CD8-positive, alpha-beta T cell (primary cell): ENCODE measurements at regions of chr2 and their contacts with region 1.

Region 1: GRCh38 chr2:96485751-96486651 is 19.2 kb downstream of the NEURL3 start:
- DNase-seq: peak; percentile 48 to 91 (median 77)
- ATAC-seq: peak; percentile 93
- H3K4me3 ChIP-seq: peak overlapping the region; percentile 56 to 59
- H3K4me3 Mint-ChIP-seq: peak overlapping the region; percentile 88
- H3K27ac ChIP-seq: peak overlapping the region; percentile 73 to 88
- H3K27ac Mint-ChIP-seq: peak overlapping the region; percentile 97
- H3K4me1 ChIP-seq: peaks cover 18% of the 10 kb centered on the region
- H3K4me1 Mint-ChIP-seq: peaks cover 22% of the 10 kb centered on the region
- H3K27me3 ChIP-seq: no peaks in the 10 kb centered on the region
- H3K27me3 Mint-ChIP-seq: no peaks in the 10 kb centered on the region
- CTCF ChIP-seq: no peak

Region 2: DNA sequence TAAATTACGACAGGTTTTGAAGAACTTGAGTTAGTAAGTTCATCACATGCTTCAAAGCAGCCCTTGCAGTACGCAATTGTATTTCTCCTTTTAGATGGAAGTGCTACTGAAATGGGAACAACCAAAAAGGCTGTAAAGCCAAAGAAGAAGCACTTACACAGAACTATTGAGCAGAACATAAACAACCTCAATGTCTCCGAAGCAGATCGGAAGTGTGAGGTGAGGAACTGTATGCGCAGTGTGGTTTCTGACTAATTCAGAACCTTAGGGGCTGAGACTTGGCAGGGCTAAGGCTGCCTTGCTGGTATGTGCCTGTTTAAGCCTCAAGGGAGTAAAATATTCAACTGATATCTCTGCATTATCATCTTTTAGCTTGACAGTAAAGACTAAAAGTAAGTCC is 142.0 kb before region 1 on chr2:
- CTCF ChIA-PET with region 1: no interaction called
- POLR2A ChIA-PET with region 1: no interaction called
- intact Hi-C with region 1: loop called in 1 of 2 experiments (anchors 5 kb)
- DNase-seq: peak in 8 of 9 experiments; percentile 29 to 84 (median 62)
- ATAC-seq: peak; percentile 78
- H3K4me3 ChIP-seq: no peak overlapping the region
- H3K4me3 Mint-ChIP-seq: no peak overlapping the region
- H3K27ac ChIP-seq: peak overlapping the region; percentile 19 to 63
- H3K27ac Mint-ChIP-seq: peak overlapping the region; percentile 80
- H3K4me1 ChIP-seq: peaks cover 16% of the 10 kb centered on the region
- H3K4me1 Mint-ChIP-seq: peaks cover 40% of the 10 kb centered on the region
- H3K27me3 ChIP-seq: no peaks in the 10 kb centered on the region
- H3K27me3 Mint-ChIP-seq: no peaks in the 10 kb centered on the region
- CTCF ChIP-seq: no peak

Region 3: DNA sequence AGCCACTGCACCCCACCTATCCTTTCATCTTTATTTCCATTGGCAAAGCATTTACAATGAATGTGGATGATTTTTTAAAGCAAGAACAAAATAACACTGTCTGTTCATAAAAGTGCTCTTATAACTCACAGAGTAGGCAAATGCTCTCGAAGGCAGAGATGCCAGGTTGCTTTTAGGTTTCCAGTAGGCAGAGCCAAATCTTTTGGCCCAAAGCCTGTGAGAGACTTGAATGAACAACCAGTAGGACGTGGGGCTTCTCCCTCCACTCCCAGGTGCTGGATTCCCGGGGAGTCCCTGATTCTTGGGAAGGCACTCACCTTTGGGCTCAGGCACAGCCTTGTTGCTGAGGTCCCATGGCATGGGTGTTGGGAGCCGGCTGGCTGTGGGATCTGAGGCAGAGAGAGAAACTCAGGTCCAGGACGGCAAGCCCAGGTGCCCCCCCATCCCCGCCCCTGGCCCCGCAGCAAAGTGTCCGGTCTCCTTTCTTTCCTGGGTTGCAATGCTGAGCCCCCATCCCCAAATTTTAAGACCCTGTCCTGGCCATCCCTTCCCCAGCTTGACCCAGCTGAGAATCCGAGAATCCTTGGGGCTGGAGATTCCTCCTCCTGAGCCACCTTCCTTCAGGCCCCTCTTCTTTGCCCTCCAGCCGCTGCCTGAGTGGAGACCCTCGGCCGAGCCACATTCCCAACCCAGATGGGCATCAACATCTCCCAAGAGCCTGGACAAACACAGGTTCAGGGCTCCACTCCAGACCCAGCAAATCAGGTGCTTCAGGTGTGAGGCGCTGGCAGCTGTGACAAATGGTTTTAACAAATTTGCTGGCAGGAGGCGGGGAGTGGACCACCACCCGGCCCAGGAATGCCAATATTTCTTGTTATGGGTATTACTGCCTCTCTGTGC is 13.3 kb after region 1 on chr2:
- CTCF ChIA-PET with region 1: no interaction called
- POLR2A ChIA-PET with region 1: no interaction called
- intact Hi-C with region 1: no loop called
- DNase-seq: no peak
- ATAC-seq: no peak
- H3K4me3 ChIP-seq: no peak overlapping the region
- H3K4me3 Mint-ChIP-seq: no peak overlapping the region
- H3K27ac ChIP-seq: no peak overlapping the region
- H3K27ac Mint-ChIP-seq: no peak overlapping the region
- H3K4me1 ChIP-seq: peaks cover 16% of the 10 kb centered on the region
- H3K4me1 Mint-ChIP-seq: peaks cover 8% of the 10 kb centered on the region
- H3K27me3 ChIP-seq: no peaks in the 10 kb centered on the region
- H3K27me3 Mint-ChIP-seq: peaks cover 2% of the 10 kb centered on the region
- CTCF ChIP-seq: no peak

Region 4: DNA sequence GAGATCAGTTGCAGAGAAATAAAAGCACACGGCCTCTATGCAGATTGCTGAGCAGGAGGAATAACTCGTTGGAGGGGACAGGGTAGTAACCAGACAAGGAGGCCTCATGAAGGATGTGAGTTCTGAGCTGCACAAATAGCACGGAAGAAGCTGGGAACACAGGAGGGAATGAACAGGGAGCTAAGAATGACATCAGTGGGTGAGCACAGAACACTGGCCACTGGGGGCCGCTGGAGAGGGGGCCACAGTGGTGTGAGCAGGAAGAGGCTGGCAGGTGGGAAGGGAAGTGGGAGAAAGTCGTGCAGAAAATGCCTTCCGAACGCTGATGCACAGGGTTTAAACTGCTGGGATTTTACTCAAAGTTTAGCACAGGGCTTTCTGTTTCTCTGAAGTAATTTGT is 1288.4 kb after region 1 on chr2:
- CTCF ChIA-PET with region 1: no interaction called
- POLR2A ChIA-PET with region 1: no interaction called
- intact Hi-C with region 1: no loop called
- DNase-seq: no peak
- ATAC-seq: no peak
- H3K4me3 ChIP-seq: no peak overlapping the region
- H3K4me3 Mint-ChIP-seq: no peak overlapping the region
- H3K27ac ChIP-seq: no peak overlapping the region
- H3K27ac Mint-ChIP-seq: peak overlapping the region; percentile 14
- H3K4me1 ChIP-seq: no peaks in the 10 kb centered on the region
- H3K4me1 Mint-ChIP-seq: no peaks in the 10 kb centered on the region
- H3K27me3 ChIP-seq: no peaks in the 10 kb centered on the region
- H3K27me3 Mint-ChIP-seq: no peaks in the 10 kb centered on the region
- CTCF ChIP-seq: no peak